Activated naive CD4-positive, alpha-beta T cell treated with anti-CD3 and anti-CD28 coated beads for 36 hours (primary cell): ENCODE measurements at regions of chr9 and their contacts with region 1.

Region 1: GRCh38 chr9:91047993-91048607 is 246.5 kb downstream of the SYK start:
- DNase-seq: peak; percentile 75
- H3K4me3 Mint-ChIP-seq: peak overlapping the region; percentile 20
- H3K27ac Mint-ChIP-seq: peak overlapping the region; percentile 89
- H3K4me1 Mint-ChIP-seq: peaks cover 44% of the 10 kb centered on the region
- H3K27me3 Mint-ChIP-seq: peaks cover 36% of the 10 kb centered on the region

Region 2: DNA sequence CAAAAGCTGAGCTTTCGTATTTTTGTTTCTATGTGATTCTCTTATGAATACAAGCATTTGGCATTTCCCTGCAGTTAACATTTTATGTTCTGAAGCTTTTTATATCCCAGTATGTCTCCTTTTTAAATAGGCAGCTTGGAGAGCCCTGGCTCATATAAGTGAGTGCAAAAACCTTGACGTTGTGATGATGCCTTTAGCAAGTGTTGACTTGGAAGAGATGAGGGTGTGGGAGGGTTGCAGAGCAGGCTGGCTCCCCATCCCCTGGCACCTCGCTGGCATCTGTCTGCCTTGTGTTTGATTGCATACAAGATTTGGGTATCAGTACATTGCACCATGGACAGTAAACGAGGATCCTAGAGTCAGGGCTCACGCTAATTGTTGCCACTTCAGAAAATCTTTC is 363.4 kb before region 1 on chr9:
- CTCF ChIA-PET with region 1: no interaction called
- intact Hi-C with region 1: no loop called
- DNase-seq: no peak
- H3K4me3 Mint-ChIP-seq: no peak overlapping the region
- H3K27ac Mint-ChIP-seq: no peak overlapping the region
- H3K4me1 Mint-ChIP-seq: no peaks in the 10 kb centered on the region
- H3K27me3 Mint-ChIP-seq: peaks cover 5% of the 10 kb centered on the region

Region 3: DNA sequence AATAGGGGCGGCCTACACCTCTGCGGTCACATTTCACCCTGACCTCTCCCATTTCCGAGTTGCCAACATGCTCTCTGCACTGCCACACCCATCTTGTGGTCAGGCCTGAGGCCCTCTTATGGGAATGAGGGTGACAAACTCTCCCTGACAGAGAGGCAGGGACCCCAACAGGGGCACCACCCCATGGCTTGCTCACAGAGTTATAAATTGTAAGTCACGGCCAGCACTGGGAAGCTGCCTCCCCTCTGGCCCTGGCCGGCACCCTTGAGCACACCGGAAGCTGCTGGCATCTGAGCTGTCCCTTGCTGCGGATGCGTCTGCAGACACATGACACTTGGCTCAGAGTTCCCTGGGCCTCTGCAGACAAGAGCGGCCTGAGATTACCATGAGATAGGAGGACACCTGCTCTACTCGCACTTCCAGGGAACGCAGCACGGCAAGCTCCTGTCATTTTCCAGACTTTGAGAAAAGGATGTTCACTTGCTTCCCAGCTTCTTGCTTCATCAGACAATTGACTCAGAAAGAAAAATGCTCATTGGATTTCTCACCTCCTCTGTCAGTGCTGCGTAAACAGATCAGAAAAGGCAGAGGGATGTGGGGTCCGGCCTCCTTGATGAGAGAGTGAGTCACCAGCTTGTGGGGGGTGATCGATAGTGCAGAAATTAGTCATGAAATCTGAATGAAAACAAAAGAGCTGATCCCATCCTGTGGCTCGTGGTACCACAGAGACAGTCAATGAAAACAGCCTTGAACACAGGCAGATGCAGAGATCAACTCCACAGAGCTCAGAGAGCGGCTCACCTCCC is 23.3 kb after region 1 on chr9:
- CTCF ChIA-PET with region 1: no interaction called
- intact Hi-C with region 1: loop called (anchors 1 kb)
- DNase-seq: peak; percentile 85
- H3K4me3 Mint-ChIP-seq: no peak overlapping the region
- H3K27ac Mint-ChIP-seq: peak overlapping the region; percentile 57
- H3K4me1 Mint-ChIP-seq: peaks cover 11% of the 10 kb centered on the region
- H3K27me3 Mint-ChIP-seq: peaks cover 13% of the 10 kb centered on the region

Region 4: GRCh38 chr9:91131433-91131839 is 83.3 kb after region 1 on chr9:
- CTCF ChIA-PET with region 1: interaction called, 3 read pairs
- intact Hi-C with region 1: loop called (anchors 1 kb)
- DNase-seq: peak; percentile 86
- H3K4me3 Mint-ChIP-seq: no peak overlapping the region
- H3K27ac Mint-ChIP-seq: peak overlapping the region; percentile 82
- H3K4me1 Mint-ChIP-seq: peaks cover 15% of the 10 kb centered on the region
- H3K27me3 Mint-ChIP-seq: peaks cover 11% of the 10 kb centered on the region

Region 5: GRCh38 chr9:91273853-91274552 is 225.9 kb after region 1 on chr9:
- CTCF ChIA-PET with region 1: no interaction called
- intact Hi-C with region 1: loop called (anchors 5 kb)
- DNase-seq: peak; percentile 25
- H3K4me3 Mint-ChIP-seq: no peak overlapping the region
- H3K27ac Mint-ChIP-seq: no peak overlapping the region
- H3K4me1 Mint-ChIP-seq: peaks cover 8% of the 10 kb centered on the region
- H3K27me3 Mint-ChIP-seq: no peaks in the 10 kb centered on the region

Region 6: DNA sequence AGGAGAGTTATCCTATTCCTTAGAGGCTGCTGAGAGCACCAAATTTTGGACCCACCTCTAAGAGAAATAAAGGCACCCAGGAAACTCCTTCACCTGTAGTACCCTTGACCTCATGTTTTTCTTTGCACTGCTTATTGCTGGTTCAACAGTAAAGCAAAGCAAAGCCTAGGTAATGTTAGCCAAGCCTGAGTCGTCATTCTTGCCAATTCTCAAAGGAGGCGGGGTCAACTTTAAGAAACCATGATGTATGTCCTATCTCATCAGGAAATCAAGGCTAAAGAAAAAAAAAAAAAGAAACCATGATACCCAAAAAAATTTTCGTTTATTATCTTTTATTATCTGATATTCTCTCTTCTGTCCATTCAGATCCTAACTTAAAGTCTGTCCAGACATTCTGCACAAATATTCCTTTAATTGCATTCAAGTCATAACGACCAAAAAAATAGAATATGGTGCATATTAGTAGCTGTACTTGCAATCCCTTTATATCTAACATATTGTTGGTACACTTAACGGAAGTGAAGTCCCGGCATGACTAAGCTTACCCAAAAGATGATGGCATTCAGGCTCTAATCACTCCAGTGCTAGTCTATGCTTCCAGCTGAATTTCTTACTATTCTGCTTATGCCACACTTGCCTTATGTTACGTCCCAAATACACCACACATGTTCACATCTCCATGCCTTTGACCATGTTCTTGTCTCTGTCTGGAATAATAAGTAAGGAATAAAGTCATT is 311.8 kb after region 1 on chr9:
- CTCF ChIA-PET with region 1: no interaction called
- intact Hi-C with region 1: loop called (anchors 2 kb)
- DNase-seq: no peak
- H3K4me3 Mint-ChIP-seq: peak overlapping the region; percentile 91
- H3K27ac Mint-ChIP-seq: peak overlapping the region; percentile 54
- H3K4me1 Mint-ChIP-seq: peaks cover 47% of the 10 kb centered on the region
- H3K27me3 Mint-ChIP-seq: no peaks in the 10 kb centered on the region

Region 7: GRCh38 chr9:91395553-91396471 is 347.7 kb after region 1 on chr9:
- CTCF ChIA-PET with region 1: no interaction called
- intact Hi-C with region 1: loop called (anchors 1 kb)
- DNase-seq: peak; percentile 41
- H3K4me3 Mint-ChIP-seq: no peak overlapping the region
- H3K27ac Mint-ChIP-seq: peak overlapping the region; percentile 74
- H3K4me1 Mint-ChIP-seq: peaks cover 11% of the 10 kb centered on the region
- H3K27me3 Mint-ChIP-seq: peaks cover 12% of the 10 kb centered on the region

Region 8: DNA sequence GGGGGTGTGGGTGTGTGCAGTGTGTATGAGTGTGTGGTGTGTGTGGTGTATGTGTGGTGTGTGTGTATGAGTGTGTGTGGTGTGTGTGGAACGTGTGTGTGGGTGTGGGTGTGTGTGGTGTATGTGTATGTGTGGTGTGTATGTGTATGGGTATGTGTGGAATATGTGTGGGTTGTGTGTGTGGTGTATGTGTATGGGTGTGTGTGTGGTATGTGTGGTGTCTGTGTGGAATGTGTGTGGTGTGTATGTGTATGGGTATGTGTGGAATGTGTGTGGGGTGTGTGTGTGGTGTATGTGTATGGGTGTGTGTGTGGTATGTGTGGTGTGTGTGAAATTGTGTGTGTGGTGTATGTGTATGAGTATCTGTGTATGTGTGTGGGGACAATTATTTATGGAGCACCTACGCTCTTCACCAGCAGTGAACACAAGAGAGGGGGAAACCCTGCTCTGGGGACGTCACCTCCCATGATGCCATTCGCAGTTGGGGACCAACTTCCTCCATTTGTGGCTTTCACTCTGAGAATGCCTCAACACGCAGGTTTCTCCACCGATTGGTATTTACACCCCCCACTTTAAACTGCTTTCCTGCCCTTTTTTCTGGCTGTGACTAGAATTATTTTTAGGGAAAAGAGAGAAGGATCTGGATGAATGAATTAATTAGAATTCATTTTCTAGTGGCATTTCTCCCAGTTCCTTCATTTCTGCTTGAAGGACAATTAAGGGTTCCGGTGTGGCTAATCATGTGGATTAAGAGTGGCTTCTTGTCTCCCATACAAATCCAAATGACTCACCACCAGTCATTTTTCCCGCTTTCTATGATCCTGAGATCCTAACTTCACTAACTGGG is 663.9 kb after region 1 on chr9:
- CTCF ChIA-PET with region 1: no interaction called
- intact Hi-C with region 1: loop called (anchors 2 kb)
- DNase-seq: peak; percentile 92
- H3K4me3 Mint-ChIP-seq: no peak overlapping the region
- H3K27ac Mint-ChIP-seq: no peak overlapping the region
- H3K4me1 Mint-ChIP-seq: no peaks in the 10 kb centered on the region
- H3K27me3 Mint-ChIP-seq: peaks cover 28% of the 10 kb centered on the region